ENCODE measurements at regions of chr17 and their contacts with region 1.

Region 1: DNA sequence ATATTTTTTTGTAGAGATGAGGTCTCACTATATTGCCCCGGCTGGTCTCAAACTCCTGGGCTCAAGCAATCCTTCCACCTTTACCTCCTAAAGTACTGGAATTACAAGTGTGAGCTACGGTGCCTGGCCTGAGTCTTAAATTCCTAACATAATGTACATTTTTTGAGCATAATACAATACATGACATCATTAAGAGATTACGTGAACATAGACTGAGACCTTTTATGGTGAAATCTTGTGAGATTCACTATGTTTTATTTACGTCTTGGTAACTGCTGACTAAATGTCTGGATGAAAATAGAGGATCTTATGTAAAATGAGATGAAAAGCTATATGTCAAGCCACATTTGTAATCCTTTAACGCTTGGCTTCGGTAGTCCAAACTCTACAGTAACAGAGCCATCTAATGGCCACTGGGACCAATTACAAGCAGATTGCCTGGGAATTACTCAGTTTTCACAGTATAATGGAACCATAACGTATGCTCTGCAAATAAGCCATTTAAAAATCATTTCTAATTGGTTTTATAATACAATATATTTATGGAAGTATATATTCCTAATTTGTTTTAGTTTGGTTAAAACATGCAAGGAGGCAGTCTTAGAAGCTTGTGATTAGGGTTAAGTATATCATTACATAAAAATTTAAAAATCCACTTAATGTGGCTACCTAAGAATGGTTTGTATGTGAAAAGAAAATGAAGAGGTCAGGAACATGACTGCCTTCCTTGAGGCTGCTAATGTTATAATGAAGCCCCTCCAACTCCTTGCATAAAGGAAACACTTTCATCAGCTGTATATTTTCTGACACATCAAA is 8.1 kb upstream of the EFCAB13 start:
- DNase-seq: no peak

Region 2: GRCh38 chr17:47253541-47254402 is 61.9 kb before region 1 on chr17 and contains the start of gene ITGB3:
- intact Hi-C with region 1: loop called in 1 of 2 experiments (anchors 2 kb)
- DNase-seq: peak; percentile 93
- total RNA-seq, gene ITGB3: 32.1 to 53.5 TPM